GM10248 (cell line): ENCODE measurements at regions of chr4 and their contacts with region 1.

Region 1: DNA sequence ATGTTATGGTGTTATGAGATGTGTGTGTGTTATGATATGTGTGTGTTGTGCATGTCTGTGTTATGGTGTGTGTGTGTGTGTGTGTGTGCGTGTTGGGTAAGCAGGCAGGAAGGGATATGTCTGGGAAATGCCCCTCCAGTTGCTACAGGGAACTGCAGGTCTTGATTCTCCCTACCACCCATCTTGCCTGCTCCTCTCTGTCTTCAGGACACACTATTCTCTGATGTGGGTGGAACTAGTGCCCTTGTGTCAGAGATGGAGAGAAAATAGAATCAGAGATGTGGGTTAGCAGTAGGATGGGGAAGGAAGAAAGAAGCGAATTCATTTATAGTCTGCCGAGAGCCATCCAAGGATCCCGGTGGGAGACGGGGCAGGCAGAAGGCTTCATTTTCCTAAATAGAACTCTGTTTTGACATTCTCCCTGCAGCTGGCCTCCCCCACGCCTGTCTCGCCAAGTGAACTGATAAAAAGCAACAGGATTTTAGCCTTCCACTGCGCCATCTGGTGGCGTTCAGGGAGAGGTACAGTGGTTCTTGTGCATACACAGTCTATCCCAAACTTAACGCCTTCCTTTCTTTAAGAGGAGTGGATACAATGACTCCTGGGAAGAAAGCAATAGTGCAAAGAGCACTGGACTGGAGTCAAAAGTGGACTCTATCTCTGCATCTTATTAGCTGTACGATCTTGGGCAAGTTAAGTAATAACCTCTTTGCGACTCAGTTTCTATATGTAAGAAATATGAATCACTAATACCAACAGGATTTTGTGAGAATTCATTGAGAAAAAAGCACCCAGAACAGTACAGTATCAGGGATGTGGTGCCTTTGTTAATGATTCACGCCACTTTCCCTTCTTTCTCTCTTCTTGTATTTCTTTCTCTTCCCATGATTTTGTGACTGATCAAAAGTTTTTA is 14.1 kb upstream of the MGST2 start:
- DNase-seq: peak; percentile 58
- CTCF ChIP-seq: peak; percentile 93

Region 2: GRCh38 chr4:139603576-139604387 is 47.8 kb before region 1 on chr4:
- CTCF ChIA-PET with region 1: interaction called, 66 read pairs
- POLR2A ChIA-PET with region 1: no interaction called
- DNase-seq: peak; percentile 45
- CTCF ChIP-seq: peak; percentile 59

Region 3: DNA sequence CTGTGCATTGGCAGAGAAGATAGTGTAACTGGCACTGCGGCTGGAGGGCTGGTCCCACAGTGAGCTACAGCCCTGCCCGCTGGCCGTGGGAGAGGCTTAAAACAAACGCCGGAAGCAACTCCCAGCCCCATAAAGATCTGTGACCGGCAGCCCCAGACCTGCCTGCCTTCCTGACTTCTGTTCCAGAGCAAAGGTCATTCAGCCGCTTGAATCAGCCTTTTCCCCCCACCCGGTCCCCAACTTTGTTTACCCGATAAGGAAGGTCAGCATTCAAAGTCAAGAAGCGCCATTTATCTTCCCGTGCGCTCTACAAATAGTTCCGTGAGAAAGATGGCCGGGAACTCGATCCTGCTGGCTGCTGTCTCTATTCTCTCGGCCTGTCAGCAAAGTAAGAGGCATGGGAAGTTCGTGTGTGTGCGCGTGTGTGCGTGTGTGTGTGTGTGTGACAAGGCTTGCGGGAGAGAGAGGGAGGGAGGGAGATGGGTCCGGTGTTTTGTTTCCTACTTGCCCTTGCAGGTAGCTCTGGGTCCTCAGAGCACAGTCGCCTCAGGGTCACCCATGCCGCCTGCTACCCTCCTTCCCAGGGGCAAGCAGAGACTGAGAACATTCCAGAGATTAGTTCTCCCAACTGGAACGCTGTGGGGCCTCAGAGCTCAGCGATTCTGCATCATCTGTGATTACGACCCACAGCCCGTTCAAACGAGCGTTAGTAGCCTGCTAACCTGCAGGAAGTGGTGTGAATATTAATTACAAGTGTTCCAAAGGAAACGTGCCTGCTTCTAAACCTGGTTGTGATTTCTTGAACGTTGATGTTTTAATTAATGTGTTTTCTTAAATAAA is 14.4 kb after region 1 on chr4 and contains the start of gene MGST2:
- CTCF ChIA-PET with region 1: interaction called, 176 read pairs
- POLR2A ChIA-PET with region 1: no interaction called
- DNase-seq: peak; percentile 74
- CTCF ChIP-seq: no peak